AG04450 (cell line): ENCODE measurements at regions of chr17 and their contacts with region 1.

Region 1: DNA sequence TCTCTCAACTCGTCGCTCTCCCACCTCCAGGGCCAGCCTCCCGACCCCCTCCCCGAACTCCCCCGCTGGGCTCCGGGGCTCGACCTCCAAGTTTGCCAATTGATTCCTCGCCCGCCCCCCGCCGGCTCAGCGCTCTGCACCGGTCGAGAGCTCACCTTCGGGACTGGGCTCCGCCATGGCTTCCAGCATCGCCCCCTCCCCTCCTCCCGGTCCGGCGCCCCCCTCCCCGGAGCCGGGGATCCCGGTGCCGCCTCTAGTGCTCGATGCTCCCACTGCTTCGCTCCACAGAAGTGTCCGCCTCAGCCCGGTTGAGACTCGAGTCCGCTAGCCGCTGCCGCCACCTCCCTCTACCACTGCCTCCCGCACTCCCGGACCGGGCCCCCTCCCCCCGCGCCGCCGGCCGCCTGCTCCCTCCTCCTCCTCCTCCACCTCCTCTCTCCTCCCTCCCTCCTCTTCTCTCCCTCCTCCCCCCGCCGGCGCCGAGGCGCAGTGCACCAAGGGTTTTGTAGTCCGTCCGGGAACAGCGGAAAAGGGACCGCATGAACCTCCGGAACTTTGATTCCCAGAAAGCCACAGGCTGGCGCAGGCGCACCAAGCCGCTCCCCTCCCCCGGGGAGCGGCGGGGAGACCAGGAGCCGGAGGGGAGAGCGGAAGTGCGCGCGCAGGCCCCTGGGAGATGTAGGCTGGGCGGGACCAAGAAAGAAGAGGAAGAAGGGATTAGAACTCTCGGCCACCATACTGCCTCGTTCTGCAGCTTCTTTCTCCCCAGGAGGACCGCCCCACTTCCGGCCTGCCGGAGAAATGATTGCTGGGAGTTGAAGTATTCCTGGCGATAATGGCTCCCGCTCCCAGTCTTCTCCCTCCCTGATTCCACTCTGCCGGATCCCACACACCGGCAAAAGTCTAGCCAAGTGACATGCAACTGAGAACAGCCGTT is at the start of gene PHF23:
- DNase-seq: peak; percentile 99
- H3K4me3 ChIP-seq: peak within 1 kb of the TSS; percentile 97
- H3K27ac ChIP-seq: peak within 1 kb of the TSS; percentile 70
- H3K27me3 ChIP-seq: no peaks in the 10 kb centered on the region
- CTCF ChIP-seq: no peak
- polyA plus RNA-seq, gene PHF23: 56.3 and 58.7 TPM in 2 replicates

Region 2: DNA sequence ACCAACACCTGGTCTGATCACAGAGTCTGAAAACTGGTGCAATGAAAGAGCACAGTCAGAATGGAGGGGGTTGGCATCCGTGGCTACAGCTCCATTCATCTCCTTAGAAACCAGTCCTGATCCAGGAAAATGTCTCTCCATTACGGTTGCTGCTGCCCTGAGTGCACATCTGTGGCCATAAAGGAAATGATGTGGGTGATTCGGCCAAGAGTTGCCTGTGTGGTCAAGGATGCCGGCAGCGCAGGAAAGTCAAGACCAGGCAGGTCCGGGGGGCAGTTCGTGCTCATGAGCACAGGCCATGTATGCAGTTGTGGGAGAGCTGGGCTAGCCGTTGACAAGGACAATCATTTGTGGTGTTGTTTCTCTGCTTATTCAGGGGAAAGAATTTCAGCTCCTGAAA is 477.6 kb before region 1 on chr17:
- CTCF ChIA-PET with region 1: no interaction called
- POLR2A ChIA-PET with region 1: no interaction called
- DNase-seq: no peak
- H3K4me3 ChIP-seq: no peak overlapping the region
- H3K27ac ChIP-seq: no peak overlapping the region
- H3K27me3 ChIP-seq: no peaks in the 10 kb centered on the region
- CTCF ChIP-seq: no peak

Region 3: DNA sequence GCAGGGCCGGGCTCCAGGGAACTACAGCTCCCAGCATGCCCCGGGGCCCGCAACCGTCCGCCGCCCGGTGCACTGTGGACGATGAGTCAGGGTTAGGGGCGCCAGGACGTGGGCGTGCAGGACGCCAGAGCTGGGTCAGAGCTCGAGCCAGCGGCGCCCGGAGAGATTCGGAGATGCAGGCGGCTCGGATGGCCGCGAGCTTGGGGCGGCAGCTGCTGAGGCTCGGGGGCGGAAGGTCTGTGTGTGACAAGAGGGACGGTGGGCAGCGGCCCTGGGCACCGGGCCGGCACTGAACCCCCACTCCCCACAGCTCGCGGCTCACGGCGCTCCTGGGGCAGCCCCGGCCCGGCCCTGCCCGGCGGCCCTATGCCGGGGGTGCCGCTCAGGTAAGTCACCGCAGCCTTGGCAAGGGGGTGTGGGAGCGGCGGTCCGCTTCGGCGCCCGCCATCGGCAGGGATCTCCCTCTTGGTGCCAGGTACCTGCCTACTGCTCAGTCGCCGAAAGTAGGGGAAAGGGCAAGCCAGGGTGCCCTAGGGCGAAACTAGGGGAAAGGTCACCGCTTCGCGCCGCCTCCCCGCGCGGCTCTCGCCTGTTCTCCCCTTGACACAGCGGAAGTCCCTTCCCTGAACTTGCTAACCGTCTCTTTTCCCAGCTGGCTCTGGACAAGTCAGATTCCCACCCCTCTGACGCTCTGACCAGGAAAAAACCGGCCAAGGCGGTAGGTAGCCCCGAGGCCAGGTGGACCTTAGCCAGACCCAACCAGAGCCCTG is 19.4 kb before region 1 on chr17 and contains the starts of genes ACADVL and DLG4:
- CTCF ChIA-PET with region 1: interaction called, 5 read pairs
- POLR2A ChIA-PET with region 1: interaction called, 42 read pairs
- DNase-seq: peak; percentile 74
- H3K4me3 ChIP-seq: peak within 1 kb of the TSS; percentile 86
- H3K27ac ChIP-seq: peak within 1 kb of the TSS; percentile 87
- H3K27me3 ChIP-seq: no peaks in the 10 kb centered on the region
- CTCF ChIP-seq: no peak
- polyA plus RNA-seq, gene ACADVL: 217 and 262 TPM in 2 replicates
- polyA plus RNA-seq, gene DLG4: 10.2 and 11.6 TPM in 2 replicates

Region 4: GRCh38 chr17:7252176-7253043 is 13.1 kb after region 1 on chr17 and contains the start of gene ELP5:
- CTCF ChIA-PET with region 1: interaction called, 6 read pairs
- POLR2A ChIA-PET with region 1: interaction called, 18 read pairs
- DNase-seq: peak; percentile 81
- H3K4me3 ChIP-seq: peak within 1 kb of the TSS; percentile 93
- H3K27ac ChIP-seq: peak within 1 kb of the TSS; percentile 100
- H3K27me3 ChIP-seq: no peaks in the 10 kb centered on the region
- CTCF ChIP-seq: no peak
- polyA plus RNA-seq, gene ELP5: 25.9 and 28.0 TPM in 2 replicates

Region 5: DNA sequence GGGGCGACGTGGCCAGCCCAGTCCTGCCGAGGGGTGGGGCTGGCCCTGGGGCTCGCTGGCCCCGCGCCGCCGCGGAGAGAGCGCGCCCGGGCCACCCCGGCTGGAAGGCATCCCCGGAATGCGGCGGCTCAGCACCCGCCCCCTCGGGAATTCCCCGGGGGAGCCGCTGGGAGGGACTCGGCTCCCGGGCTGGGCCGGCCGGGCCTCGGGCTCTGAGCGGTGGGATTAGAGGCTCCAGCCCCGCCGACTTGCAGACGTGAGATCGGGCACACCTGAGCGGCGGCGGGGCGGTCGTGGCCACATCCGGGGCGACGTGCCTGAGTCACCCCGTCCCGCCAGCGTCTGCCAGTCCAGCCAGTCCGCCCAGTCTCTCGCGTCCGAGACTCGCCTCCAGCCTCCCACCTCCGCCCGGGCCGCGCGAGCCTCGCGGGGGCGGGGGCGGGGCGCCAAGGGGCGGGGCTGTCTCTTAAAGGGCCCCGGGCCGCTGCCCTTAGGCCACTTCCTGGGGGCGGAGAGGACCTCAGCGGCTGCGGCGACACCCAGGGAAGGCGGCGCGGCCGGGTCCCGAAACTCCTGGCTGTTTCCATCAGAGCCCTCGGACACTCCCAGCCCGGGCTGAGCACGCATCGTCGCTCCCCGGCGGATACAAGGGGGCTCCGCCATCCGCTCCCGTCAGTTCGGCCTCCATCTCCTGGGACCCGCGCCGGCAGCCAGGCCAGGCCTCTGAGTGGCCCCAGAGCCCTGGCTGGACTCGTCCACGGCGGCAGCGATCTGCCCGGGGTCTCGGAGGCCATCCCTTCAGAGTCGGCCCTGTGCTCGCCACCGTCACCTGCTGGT is 112.5 kb after region 1 on chr17 and contains the start of gene KCTD11:
- CTCF ChIA-PET with region 1: no interaction called
- POLR2A ChIA-PET with region 1: no interaction called
- DNase-seq: peak; percentile 64
- H3K4me3 ChIP-seq: peak within 1 kb of the TSS; percentile 91
- H3K27ac ChIP-seq: peak within 1 kb of the TSS; percentile 100
- H3K27me3 ChIP-seq: no peaks in the 10 kb centered on the region
- CTCF ChIP-seq: peak; percentile 71
- polyA plus RNA-seq, gene KCTD11: 12.1 and 13.8 TPM in 2 replicates

Region 6: DNA sequence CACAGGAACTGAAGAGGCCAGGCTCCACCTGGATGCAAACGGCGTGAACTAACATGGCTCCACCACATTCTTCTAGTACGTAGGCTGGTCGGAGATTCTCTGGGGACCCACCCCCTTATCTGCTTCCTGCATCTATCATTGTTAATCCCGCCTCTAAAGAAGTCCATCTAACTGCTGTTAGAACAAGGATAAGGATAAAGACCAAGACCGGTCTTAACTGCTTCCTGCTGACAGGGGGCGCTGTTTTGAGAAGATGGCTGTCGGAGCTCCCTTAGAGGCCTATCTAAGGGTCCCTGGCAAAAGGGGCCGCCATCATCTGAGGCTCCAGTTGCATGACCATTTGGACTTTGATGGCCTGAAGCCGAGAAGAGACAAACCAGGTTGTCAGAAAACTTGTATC is 283.7 kb after region 1 on chr17:
- CTCF ChIA-PET with region 1: interaction called, 21 read pairs
- POLR2A ChIA-PET with region 1: no interaction called
- DNase-seq: no peak
- H3K4me3 ChIP-seq: no peak overlapping the region
- H3K27ac ChIP-seq: no peak overlapping the region
- H3K27me3 ChIP-seq: no peaks in the 10 kb centered on the region
- CTCF ChIP-seq: peak; percentile 42